ENCODE measurements at regions of chr1 and their contacts with region 1.

Region 1: DNA sequence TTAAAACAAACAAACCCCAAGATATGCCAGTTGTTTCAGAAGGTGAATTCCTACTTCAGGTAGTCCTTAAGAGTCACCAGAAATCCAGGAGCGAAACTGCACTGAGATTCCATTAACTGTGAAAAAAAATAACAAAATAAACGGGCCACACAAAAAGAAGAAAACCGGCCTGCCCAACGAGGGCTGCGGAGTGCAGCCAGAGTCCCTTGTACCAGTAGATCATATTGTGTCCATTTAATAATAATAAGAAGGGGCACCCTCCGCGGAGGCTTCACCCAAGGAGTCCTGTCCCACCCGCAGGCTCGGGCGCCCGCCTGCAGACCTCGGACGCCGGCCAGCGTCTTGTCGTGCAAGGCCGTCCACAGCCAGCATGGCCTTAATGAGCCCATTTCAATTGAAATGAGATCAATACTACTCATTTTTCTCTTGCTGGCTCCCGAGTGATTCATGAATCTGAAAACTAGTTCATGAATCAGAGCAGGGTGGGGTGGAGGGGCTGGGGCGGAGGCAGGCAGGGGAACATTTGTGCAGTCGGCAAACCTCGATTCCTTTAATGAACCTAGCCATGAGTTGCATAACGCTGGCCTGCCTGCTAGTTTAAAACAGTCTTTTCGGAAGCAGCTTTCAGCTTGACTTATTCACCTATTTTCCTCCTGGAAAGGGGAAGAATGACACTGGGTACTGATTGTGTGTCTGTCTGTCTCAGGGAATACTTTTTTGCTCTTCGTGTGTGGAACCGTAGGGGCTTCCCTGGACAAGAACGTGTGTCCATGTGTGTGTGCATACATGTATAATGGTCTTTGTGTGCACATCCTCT is 113.1 kb upstream of the IRF2BP2 start:
- DNase-seq: peak; percentile 87 to 97 (median 95)
- H3K4me3 ChIP-seq: peak overlapping the region in 3 of 7 experiments; percentile 13 to 45 (median 33)
- H3K27ac ChIP-seq: peak overlapping the region; percentile 100
- H3K4me1 ChIP-seq: peaks cover 27 to 98% (median 91%) of the 10 kb centered on the region in 4 experiments
- H3K27me3 ChIP-seq: no peaks in the 10 kb centered on the region

Region 2: GRCh38 chr1:234617131-234617985 is 105.8 kb before region 1 on chr1:
- CTCF ChIA-PET with region 1: interaction called, 30 read pairs
- POLR2A ChIA-PET with region 1: interaction called, 117 read pairs
- DNase-seq: peak in 2 of 3 donors; percentile 60 to 63
- H3K4me3 ChIP-seq: no peak overlapping the region
- H3K27ac ChIP-seq: no peak overlapping the region
- H3K4me1 ChIP-seq: peaks cover 23 to 57% (median 40%) of the 10 kb centered on the region in 4 experiments
- H3K27me3 ChIP-seq: no peaks in the 10 kb centered on the region

Region 3: GRCh38 chr1:234686035-234686434 is 37.1 kb before region 1 on chr1:
- CTCF ChIA-PET with region 1: no interaction called
- POLR2A ChIA-PET with region 1: no interaction called
- DNase-seq: peak in 2 of 3 donors; percentile 35 to 57
- H3K4me3 ChIP-seq: no peak overlapping the region
- H3K27ac ChIP-seq: no peak overlapping the region
- H3K4me1 ChIP-seq: peaks cover 0 to 7% (median 0%) of the 10 kb centered on the region in 4 experiments
- H3K27me3 ChIP-seq: no peaks in the 10 kb centered on the region

Region 4: DNA sequence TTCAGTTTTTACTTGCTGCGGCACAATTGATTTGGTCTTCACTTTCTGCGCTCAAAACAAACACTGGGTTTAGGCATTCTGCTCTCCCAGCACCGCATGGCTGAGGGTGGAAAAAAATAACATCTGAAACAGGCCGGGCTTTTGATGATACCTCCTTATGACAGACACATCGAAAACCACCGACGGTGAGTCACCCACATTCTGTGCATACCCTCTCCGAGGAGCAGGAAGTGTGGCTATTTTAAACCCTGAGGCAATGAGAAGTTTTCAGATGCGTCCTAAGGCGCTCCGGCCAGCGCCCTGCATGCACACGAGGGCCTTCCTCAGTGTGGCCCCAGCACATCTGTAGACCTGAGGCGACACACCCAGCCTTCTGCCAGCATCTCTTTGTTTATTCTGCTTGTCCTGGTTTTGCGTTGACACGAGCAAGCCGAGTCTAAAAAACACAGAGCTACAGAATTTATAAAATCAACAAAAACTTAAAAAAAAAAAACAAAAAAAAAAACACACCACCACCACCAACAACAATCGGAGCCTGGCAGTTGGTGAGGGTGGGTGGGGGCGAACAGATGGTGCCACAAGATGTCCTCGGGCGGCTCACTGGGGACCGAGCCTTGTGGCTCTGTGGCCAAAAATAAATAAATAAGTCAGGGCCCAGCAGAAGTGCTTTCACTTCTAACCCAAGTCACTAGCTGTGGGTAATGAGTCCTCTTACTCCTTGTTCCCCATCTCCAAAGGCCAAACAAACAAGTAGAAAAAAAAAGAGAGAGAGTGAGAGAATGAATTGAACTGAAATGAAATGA is 49.4 kb after region 1 on chr1:
- CTCF ChIA-PET with region 1: interaction called, 52 read pairs
- POLR2A ChIA-PET with region 1: interaction called, 44 read pairs
- DNase-seq: peak; percentile 96 to 99 (median 99)
- H3K4me3 ChIP-seq: peak overlapping the region in 1 of 7 experiments; percentile 35
- H3K27ac ChIP-seq: peak overlapping the region; percentile 86 to 91
- H3K4me1 ChIP-seq: peaks cover 26 to 70% (median 54%) of the 10 kb centered on the region in 4 experiments
- H3K27me3 ChIP-seq: peaks cover 0 to 2% (median 0%) of the 10 kb centered on the region in 5 experiments

Region 5: GRCh38 chr1:234842726-234843641 is 119.9 kb after region 1 on chr1:
- CTCF ChIA-PET with region 1: interaction called, 4 read pairs
- POLR2A ChIA-PET with region 1: interaction called, 10 read pairs
- DNase-seq: peak; percentile 36 to 93 (median 87)
- H3K4me3 ChIP-seq: peak overlapping the region in 3 of 7 experiments; percentile 2 to 39 (median 15)
- H3K27ac ChIP-seq: peak overlapping the region; percentile 16 to 51
- H3K4me1 ChIP-seq: peaks cover 47 to 81% (median 58%) of the 10 kb centered on the region in 4 experiments
- H3K27me3 ChIP-seq: no peaks in the 10 kb centered on the region

Region 6: DNA sequence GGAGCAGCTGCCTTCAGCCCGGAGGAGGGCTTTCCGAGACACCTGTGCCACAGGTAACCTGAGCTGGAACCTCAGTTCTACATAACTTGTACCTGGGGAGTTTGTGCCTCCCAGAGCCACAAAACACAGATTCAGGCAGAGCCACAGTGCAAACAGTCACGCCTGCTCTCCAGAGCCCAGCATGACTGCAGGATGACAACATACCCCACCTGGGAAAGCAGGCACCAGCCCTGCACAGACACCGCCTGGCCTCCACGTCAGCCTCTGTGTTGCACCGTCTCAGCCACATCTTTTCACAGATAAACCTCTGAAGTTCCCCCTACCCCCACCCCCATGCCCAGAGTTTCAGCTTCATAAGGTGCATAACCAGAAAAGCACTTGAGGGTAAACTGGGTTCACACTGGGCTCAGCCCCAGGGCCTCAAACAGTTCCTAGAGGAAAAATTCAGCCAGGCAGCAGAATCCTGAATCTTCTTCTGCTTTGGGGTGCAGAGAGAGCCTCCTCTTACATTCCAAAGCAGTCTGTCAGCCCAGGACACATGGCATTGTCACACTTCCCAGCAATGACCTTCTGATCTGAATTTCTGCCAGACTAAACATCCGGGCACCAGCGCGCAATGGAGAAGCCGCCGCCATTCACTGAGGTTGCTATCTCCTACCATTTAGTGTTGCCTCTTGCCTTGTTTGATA is 176.1 kb after region 1 on chr1:
- CTCF ChIA-PET with region 1: no interaction called
- POLR2A ChIA-PET with region 1: no interaction called
- DNase-seq: no peak
- H3K4me3 ChIP-seq: no peak overlapping the region
- H3K27ac ChIP-seq: no peak overlapping the region
- H3K4me1 ChIP-seq: peaks cover 5 to 13% (median 10%) of the 10 kb centered on the region in 4 experiments
- H3K27me3 ChIP-seq: no peaks in the 10 kb centered on the region

Region 7: GRCh38 chr1:234978397-234979295 is 255.5 kb after region 1 on chr1:
- CTCF ChIA-PET with region 1: interaction called, 11 read pairs
- POLR2A ChIA-PET with region 1: interaction called, 5 read pairs
- DNase-seq: peak in 2 of 3 donors; percentile 85 to 87
- H3K4me3 ChIP-seq: peak overlapping the region in 2 of 7 experiments; percentile 8 to 41
- H3K27ac ChIP-seq: peak overlapping the region; percentile 94 to 98
- H3K4me1 ChIP-seq: peaks cover 42 to 97% (median 83%) of the 10 kb centered on the region in 4 experiments
- H3K27me3 ChIP-seq: no peaks in the 10 kb centered on the region

Region 8: DNA sequence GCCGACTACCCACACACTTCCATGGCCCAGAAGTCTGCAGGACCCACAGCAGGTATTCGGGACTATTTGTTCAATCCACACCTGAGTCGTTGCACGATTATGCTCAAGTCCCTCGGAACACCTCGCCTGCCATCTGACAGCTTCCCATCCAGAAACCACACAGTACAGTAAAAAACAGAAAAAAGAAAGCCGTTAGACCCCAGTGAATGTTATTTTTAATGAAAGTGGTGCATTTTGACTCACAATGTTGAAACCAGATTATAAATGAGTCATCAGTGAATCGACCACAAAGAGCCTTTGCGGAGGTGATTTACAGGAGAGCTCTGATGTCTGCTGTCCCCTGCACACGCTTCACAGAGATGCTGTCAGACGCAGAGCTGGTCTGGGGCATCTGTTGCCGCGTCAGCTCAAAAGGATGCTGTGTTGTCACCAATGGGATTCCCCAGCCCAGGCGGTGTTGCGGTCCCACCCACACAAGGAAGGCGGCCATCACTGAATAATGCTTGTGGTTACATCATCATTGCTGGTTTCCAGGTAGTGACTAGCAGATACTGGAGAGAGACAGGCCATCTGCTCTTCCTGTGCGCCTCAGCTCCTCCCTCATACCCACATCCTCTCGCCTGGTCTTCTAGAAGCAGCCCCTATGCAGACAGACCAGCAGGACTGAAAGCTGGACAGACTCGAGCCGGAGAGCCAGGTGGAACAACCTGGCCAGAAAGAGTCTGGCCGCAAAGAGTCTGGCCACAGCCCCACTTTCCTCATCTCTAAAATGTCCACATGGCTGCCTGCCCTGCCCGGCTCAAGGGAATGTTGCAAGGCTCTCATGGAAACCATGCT is 288.7 kb after region 1 on chr1:
- CTCF ChIA-PET with region 1: interaction called, 4 read pairs
- POLR2A ChIA-PET with region 1: interaction called, 10 read pairs
- DNase-seq: peak; percentile 99 to 100 (median 100)
- H3K4me3 ChIP-seq: peak overlapping the region in 4 of 7 experiments; percentile 15 to 44 (median 30)
- H3K27ac ChIP-seq: peak overlapping the region; percentile 91 to 94
- H3K4me1 ChIP-seq: peaks cover 3 to 52% (median 40%) of the 10 kb centered on the region in 4 experiments
- H3K27me3 ChIP-seq: no peaks in the 10 kb centered on the region

Region 9: DNA sequence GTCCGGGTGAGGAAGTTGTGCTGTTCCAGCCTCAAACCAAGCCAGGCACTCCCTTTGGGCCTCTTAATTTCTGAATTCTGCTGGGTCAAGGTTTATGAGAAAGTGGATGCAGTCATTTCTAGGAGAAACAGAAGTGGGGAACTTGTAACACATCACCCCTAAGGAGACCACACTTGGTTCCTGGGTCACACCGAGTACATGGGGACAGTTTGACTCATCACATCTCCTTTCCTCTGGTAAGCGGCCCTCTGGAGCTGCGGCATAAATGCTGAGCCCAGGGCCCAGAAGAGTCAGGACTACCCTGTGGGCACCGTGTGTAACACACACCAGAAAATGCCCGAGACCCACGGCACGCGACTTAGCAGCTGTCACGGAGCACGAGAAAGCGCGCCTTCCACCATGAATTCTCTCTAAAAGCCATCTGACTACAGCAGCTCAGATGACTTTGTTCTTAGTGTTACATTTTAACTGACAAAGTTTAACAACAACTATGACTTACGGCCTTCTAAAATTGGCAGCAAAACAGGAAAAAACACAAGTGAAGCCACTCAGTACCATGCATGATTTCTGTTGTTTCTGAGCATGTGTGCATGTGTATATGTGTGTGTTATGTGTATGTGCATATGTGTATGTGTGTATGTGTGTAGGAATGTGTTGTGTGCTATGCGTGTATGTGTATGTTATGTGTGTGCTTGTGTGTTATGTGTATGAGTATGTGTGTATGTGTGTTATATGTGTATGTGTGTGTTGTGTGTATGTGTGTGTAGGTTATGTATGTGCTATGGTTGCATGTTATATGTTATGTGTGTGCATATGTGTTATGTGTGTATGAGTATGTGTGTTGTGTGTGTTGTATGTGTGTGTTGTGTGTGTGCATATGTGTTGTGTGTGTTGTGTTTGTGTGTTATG is 354.7 kb after region 1 on chr1:
- CTCF ChIA-PET with region 1: interaction called, 14 read pairs
- POLR2A ChIA-PET with region 1: interaction called, 3 read pairs
- DNase-seq: peak in 2 of 3 donors; percentile 67 to 80
- H3K4me3 ChIP-seq: no peak overlapping the region
- H3K27ac ChIP-seq: no peak overlapping the region
- H3K4me1 ChIP-seq: peaks cover 8 to 69% (median 60%) of the 10 kb centered on the region in 4 experiments
- H3K27me3 ChIP-seq: no peaks in the 10 kb centered on the region

Measured in common myeloid progenitor, CD34-positive (primary cell).